GM12878 (cell line): ENCODE measurements at regions of chr12 and their contacts with region 1.

Region 1: DNA sequence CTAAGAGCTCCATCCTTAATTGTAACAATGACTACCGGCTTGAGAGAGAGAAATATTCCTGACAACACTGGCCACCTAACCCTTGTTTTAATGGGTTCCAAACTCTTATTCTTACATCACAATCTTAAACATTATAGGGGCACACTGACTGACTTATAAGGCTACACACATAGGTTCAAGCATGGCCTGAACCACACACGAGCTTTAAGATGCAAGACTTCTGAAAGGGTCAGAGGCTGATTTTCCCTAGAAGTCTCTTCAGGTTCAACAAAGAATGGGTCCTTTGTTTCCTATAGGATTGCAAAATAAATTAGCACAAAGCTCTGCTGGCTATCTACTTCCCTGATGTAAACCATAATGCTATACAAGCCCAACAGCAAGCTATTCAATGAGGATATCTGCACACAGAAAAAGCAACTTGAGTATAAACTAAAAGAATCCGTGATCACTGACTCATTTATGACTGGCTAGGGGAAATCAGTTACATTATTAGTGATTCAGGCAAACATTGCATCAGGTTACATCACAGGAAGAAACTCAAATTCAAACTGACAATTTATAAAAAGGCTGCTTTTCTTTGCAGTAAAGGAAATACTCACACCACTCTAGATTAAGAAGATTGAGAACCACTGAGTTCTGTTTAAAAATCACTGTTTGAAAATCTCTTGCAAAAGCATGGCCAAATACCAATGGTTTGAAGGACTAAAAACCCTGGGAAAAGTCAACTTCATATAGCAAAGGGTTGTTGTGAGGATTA is 8.5 kb downstream of the BTG1 start:
- DNase-seq: no peak
- ATAC-seq: peak; percentile 7
- H3K4me3 ChIP-seq: peak overlapping the region; percentile 89
- H3K27ac ChIP-seq: peak overlapping the region; percentile 85
- H3K4me1 ChIP-seq: peaks cover 13% of the 10 kb centered on the region; the same call in 1 of the 2 replicates
- H3K27me3 ChIP-seq: no peaks in the 10 kb centered on the region
- CTCF ChIP-seq: no peak
- EP300 ChIP-seq: no peak
- POLR2A ChIP-seq: no peak
- RAD21 ChIP-seq: no peak

Region 2: GRCh38 chr12:91400271-91400670 is 736.9 kb before region 1 on chr12:
- CTCF ChIA-PET with region 1: no interaction called
- POLR2A ChIA-PET with region 1: no interaction called
- RAD21 ChIA-PET with region 1: no interaction called
- SMC1A ChIA-PET with region 1: no interaction called
- in situ Hi-C with region 1: loop called (anchors 10 kb)
- intact Hi-C with region 1: no loop called
- DNase-seq: no peak
- ATAC-seq: no peak
- H3K4me3 ChIP-seq: no peak overlapping the region
- H3K27ac ChIP-seq: no peak overlapping the region
- H3K4me1 ChIP-seq: no peaks in the 10 kb centered on the region
- H3K27me3 ChIP-seq: no peaks in the 10 kb centered on the region
- CTCF ChIP-seq: no peak
- EP300 ChIP-seq: no peak
- POLR2A ChIP-seq: no peak
- RAD21 ChIP-seq: no peak

Region 3: GRCh38 chr12:91854725-91855124 is 282.4 kb before region 1 on chr12:
- CTCF ChIA-PET with region 1: no interaction called
- POLR2A ChIA-PET with region 1: no interaction called
- RAD21 ChIA-PET with region 1: no interaction called
- SMC1A ChIA-PET with region 1: no interaction called
- in situ Hi-C with region 1: no loop called
- intact Hi-C with region 1: no loop called
- DNase-seq: no peak
- ATAC-seq: peak; percentile 57
- H3K4me3 ChIP-seq: no peak overlapping the region
- H3K27ac ChIP-seq: no peak overlapping the region
- H3K4me1 ChIP-seq: no peaks in the 10 kb centered on the region
- H3K27me3 ChIP-seq: no peaks in the 10 kb centered on the region
- CTCF ChIP-seq: no peak; a peak in 1 of 6 replicates
- EP300 ChIP-seq: no peak
- POLR2A ChIP-seq: no peak
- RAD21 ChIP-seq: no peak; the same call in 1 of the 2 replicates

Region 4: GRCh38 chr12:91965781-91966180 is 171.4 kb before region 1 on chr12:
- CTCF ChIA-PET with region 1: no interaction called
- POLR2A ChIA-PET with region 1: no interaction called
- RAD21 ChIA-PET with region 1: no interaction called
- SMC1A ChIA-PET with region 1: no interaction called
- in situ Hi-C with region 1: no loop called
- intact Hi-C with region 1: no loop called
- DNase-seq: no peak
- ATAC-seq: no peak
- H3K4me3 ChIP-seq: no peak overlapping the region
- H3K27ac ChIP-seq: no peak overlapping the region
- H3K4me1 ChIP-seq: no peaks in the 10 kb centered on the region
- H3K27me3 ChIP-seq: no peaks in the 10 kb centered on the region
- CTCF ChIP-seq: no peak
- EP300 ChIP-seq: no peak
- POLR2A ChIP-seq: no peak
- RAD21 ChIP-seq: no peak

Region 5: DNA sequence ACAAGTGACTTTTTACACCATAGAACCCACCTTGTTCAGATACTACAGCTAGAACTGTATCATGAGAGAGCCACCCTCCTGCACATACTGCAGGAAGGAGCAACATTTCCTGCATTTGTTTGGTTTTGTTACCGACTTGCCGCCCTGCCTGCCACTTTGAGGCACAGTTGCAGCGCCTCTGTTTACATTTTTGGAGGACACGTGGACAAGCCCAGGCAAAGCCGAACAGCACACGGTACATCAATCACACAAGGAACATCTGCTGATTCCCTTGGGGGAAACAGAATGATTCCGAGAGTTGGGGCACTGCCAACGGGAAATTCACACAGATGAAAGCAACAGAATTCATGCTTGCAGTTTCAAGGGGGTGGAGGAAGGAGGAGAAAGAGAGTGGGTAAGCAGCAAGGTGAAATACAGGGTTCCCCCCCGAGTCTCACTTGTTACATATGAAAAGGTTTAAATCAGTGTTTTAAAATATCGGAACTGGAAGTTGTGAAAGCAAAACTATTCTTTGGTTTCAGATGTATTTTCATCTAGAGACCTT is 102.2 kb before region 1 on chr12:
- CTCF ChIA-PET with region 1: interaction called, 11 read pairs
- POLR2A ChIA-PET with region 1: interaction called, 11 read pairs
- RAD21 ChIA-PET with region 1: interaction called, 71 read pairs
- SMC1A ChIA-PET with region 1: interaction called, 79 read pairs
- in situ Hi-C with region 1: no loop called
- intact Hi-C with region 1: loop called (anchors 2 kb)
- DNase-seq: peak; percentile 99
- ATAC-seq: peak; percentile 84
- H3K4me3 ChIP-seq: peak overlapping the region; percentile 27
- H3K27ac ChIP-seq: peak overlapping the region; percentile 80
- H3K4me1 ChIP-seq: peaks cover 13% of the 10 kb centered on the region
- H3K27me3 ChIP-seq: no peaks in the 10 kb centered on the region
- CTCF ChIP-seq: no peak
- EP300 ChIP-seq: peak; percentile 89 to 90
- POLR2A ChIP-seq: peak; percentile 36; the same call in 1 of the 2 replicates
- RAD21 ChIP-seq: peak; percentile 41

Region 6: GRCh38 chr12:92065018-92065499 is 72.1 kb before region 1 on chr12:
- CTCF ChIA-PET with region 1: interaction called, 3 read pairs
- POLR2A ChIA-PET with region 1: interaction called, 10 read pairs
- RAD21 ChIA-PET with region 1: interaction called, 27 read pairs
- SMC1A ChIA-PET with region 1: interaction called, 52 read pairs
- in situ Hi-C with region 1: no loop called
- intact Hi-C with region 1: loop called (anchors 1 kb)
- DNase-seq: peak; percentile 78
- ATAC-seq: peak; percentile 81
- H3K4me3 ChIP-seq: no peak overlapping the region
- H3K27ac ChIP-seq: peak overlapping the region; percentile 3
- H3K4me1 ChIP-seq: peaks cover 13% of the 10 kb centered on the region
- H3K27me3 ChIP-seq: no peaks in the 10 kb centered on the region
- CTCF ChIP-seq: no peak
- EP300 ChIP-seq: peak; percentile 25 to 46; a peak in 1 of 4 replicates
- POLR2A ChIP-seq: no peak
- RAD21 ChIP-seq: no peak

Region 7: DNA sequence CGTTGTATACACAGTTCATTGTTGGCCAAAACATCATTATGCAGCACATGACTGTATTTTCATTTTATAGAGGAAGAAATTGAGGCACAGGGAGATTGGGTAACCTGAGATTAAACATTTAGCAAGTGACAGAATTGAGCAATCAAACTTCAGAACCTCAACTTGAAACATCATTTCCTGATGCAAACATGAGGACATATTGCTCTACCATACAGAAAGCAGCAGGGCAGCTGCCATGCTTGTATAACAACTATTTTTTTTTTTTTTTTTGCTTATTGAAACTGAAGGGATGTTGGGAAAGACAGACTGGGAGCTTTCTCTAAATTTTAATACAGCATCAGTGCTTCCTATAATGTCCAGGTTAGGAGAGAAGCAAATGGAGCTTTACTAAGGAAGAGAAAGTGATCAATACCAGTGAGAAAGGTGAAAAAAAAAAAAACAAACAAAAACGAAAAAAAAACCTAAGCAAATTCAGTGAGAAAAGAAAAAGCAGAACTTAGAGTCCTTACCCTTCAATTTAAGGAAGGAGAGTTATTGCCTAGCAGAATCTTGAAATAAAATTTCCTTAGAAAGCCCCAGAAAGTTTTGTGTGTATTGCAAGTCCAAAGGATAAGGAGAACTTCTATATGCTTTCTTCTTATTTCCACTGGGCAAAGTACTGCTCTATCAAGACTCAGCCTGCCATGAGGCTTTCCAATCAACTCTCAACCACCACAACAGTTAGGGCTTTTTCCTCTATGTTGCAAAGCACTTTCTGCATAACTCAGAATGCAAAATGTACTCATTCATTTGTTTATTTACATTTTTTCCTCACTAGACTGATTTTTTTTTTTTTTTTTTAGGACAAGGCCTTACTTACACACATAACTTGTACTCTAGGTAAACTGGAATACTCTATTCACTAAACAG is 13.1 kb before region 1 on chr12:
- CTCF ChIA-PET with region 1: interaction called, 4 read pairs
- POLR2A ChIA-PET with region 1: interaction called, 15 read pairs
- RAD21 ChIA-PET with region 1: interaction called, 167 read pairs
- SMC1A ChIA-PET with region 1: interaction called, 14 read pairs
- in situ Hi-C with region 1: no loop called
- intact Hi-C with region 1: no loop called
- DNase-seq: no peak
- ATAC-seq: peak; percentile 49
- H3K4me3 ChIP-seq: peak overlapping the region; percentile 16; the same call in 1 of the 2 replicates
- H3K27ac ChIP-seq: peak overlapping the region; percentile 54
- H3K4me1 ChIP-seq: peaks cover 11% of the 10 kb centered on the region
- H3K27me3 ChIP-seq: no peaks in the 10 kb centered on the region
- CTCF ChIP-seq: no peak
- EP300 ChIP-seq: no peak
- POLR2A ChIP-seq: no peak
- RAD21 ChIP-seq: no peak

Region 8: DNA sequence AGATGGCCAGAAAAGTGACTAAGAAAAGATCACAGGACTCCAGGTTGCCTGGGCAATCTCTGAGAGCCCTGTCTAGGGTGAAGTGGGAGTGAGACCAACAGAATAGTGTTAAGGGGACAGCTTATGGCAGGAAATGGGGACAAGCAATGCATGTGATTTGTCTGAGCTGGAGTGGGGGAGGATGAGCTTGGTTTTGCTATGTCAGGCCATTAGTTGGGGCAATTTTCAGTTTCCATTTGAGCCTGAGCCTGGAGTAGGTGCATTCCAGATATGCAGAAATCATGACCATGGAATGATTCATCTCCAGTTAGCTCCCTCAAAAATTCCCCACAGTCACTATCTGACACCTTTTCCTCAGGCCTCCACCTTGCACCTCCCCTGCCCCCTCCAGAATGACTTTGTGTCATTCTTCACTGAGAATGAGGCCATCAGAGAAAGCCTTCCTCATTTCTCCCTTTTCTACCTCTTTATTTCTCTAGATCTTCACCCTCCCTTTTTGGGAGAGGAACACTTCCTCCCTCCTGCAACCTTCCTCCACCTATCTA is 414.8 kb after region 1 on chr12:
- CTCF ChIA-PET with region 1: interaction called, 5 read pairs
- POLR2A ChIA-PET with region 1: interaction called, 5 read pairs
- RAD21 ChIA-PET with region 1: interaction called, 10 read pairs
- SMC1A ChIA-PET with region 1: interaction called, 4 read pairs
- in situ Hi-C with region 1: no loop called
- intact Hi-C with region 1: no loop called
- DNase-seq: peak; percentile 98
- ATAC-seq: peak; percentile 75
- H3K4me3 ChIP-seq: peak overlapping the region; percentile 17; the same call in 1 of the 2 replicates
- H3K27ac ChIP-seq: peak overlapping the region; percentile 98
- H3K4me1 ChIP-seq: peaks cover 67% of the 10 kb centered on the region
- H3K27me3 ChIP-seq: no peaks in the 10 kb centered on the region
- CTCF ChIP-seq: no peak
- EP300 ChIP-seq: peak; percentile 92 to 97
- POLR2A ChIP-seq: peak; percentile 57
- RAD21 ChIP-seq: no peak